B cell (primary cell): ENCODE measurements at regions of chr14 and their contacts with region 1.

Region 1: DNA sequence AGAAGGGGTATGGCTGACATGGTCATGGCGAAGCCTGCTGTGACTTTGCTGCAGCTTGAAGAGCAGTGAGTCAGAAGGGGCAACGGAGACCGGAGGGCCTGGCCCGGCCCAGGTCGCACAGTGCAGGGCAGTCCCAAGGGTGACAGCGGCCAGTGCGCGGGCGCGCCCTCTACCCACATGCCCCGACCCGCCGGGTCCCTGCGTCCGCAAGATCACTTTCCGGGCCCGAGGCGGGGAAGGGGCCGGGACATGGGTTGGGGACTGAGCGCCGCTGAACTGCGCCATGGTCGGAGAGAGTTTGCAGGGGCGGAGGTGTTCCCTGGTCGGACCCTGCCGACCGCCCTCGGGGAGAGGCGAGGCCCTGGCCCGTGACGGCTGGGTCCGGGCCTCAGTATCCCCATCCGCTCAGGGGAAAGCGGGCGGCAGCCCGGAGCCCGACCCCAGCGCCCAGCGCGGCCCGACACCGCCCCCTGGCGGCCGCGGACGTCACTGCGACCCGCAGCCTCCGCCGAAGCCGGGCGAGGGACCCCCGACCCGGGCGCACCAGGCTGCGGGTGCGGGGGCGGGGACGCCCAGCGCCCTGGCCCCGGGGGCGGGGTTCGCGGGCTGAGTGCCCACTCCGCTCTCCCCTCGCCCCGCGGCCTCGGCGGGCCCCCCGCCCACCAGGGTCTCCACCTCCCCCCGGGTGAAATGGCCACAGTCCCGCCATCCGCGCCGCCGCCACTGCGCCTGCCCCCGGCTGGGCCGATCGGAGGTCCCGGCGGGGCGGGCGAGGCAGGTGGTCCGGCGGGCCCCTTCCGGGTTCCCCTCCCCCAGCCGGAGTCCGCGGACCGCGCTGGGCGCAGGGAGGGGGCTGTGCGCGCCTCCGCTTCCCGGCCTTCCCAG is 7.2 kb upstream of the ANKRD9 start:
- DNase-seq: peak; percentile 74
- ATAC-seq: peak; percentile 89
- H3K4me3 ChIP-seq: peak overlapping the region in 4 of 5 experiments; percentile 33 to 64 (median 54)
- H3K4me3 Mint-ChIP-seq: peak overlapping the region; percentile 88
- H3K27ac ChIP-seq: no peak overlapping the region
- H3K27ac Mint-ChIP-seq: peak overlapping the region; percentile 68
- H3K4me1 ChIP-seq: peaks cover 10 to 12% of the 10 kb centered on the region in 2 donors
- H3K4me1 Mint-ChIP-seq: peaks cover 7% of the 10 kb centered on the region
- H3K27me3 ChIP-seq: peaks cover 0 to 30% (median 3%) of the 10 kb centered on the region in 4 experiments
- H3K27me3 Mint-ChIP-seq: peaks cover 15% of the 10 kb centered on the region
- CTCF ChIP-seq: peak; percentile 96

Region 2: DNA sequence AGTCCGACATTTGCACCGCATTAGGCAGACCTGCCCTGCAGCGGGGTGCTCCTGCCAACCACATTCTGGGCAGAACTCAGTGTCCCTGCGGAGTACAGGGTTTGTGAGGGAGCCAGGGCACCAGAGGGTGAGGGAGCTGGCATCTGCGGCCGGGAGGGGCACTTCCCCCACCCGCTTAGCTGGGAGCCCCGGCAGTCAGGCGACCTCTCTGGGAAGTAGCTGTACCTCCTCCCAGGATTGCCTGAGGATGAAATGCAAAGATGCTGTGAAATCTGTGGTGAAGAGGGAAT is 65.8 kb before region 1 on chr14:
- CTCF ChIA-PET with region 1: interaction called, 10 read pairs
- POLR2A ChIA-PET with region 1: no interaction called
- intact Hi-C with region 1: no loop called
- DNase-seq: no peak
- ATAC-seq: no peak
- H3K4me3 ChIP-seq: no peak overlapping the region
- H3K4me3 Mint-ChIP-seq: no peak overlapping the region
- H3K27ac ChIP-seq: no peak overlapping the region
- H3K27ac Mint-ChIP-seq: no peak overlapping the region
- H3K4me1 ChIP-seq: no peaks in the 10 kb centered on the region
- H3K4me1 Mint-ChIP-seq: no peaks in the 10 kb centered on the region
- H3K27me3 ChIP-seq: no peaks in the 10 kb centered on the region
- H3K27me3 Mint-ChIP-seq: no peaks in the 10 kb centered on the region
- CTCF ChIP-seq: no peak

Region 3: DNA sequence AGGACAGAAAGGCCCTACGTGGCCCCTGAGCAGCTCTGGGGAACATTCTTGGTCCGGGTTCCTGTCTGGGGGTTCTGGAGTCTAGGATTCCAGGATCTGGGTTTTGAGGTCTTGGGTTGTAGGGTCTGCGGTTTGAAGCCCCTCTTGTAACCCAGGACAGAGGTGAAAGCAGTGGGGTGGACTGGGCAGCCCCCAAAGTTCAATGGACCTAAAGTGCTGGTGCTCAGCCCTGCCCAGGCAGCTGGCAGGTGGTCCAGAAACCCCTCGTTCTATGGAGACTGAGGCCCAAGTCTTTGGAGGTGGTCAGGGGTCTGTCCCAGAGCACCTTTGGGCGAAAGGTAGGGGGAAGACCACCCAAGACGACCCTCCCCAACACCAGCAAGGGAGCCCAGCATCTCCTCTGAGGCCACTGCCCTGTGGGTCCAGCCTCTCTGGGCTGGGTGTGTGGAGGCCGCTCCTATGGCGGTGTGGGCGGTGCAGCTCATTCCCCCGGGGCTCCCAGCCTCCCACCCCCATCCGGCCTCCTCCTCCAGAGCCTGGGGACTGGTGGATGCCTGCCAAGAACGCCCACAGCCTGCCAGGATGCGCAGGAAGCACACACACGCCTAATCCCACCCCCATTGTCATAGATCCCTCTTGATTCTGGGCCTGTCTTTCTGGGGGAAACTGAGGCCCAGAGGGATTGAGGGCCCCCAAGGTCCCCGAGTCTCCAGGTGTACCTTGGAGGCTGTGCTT is 23.0 kb after region 1 on chr14:
- CTCF ChIA-PET with region 1: no interaction called
- POLR2A ChIA-PET with region 1: no interaction called
- intact Hi-C with region 1: no loop called
- DNase-seq: no peak
- ATAC-seq: no peak
- H3K4me3 ChIP-seq: no peak overlapping the region
- H3K4me3 Mint-ChIP-seq: no peak overlapping the region
- H3K27ac ChIP-seq: no peak overlapping the region
- H3K27ac Mint-ChIP-seq: no peak overlapping the region
- H3K4me1 ChIP-seq: peaks cover 7 to 16% of the 10 kb centered on the region in 2 donors
- H3K4me1 Mint-ChIP-seq: no peaks in the 10 kb centered on the region
- H3K27me3 ChIP-seq: peaks cover 0 to 10% (median 7%) of the 10 kb centered on the region in 4 experiments
- H3K27me3 Mint-ChIP-seq: peaks cover 12% of the 10 kb centered on the region
- CTCF ChIP-seq: no peak